Endothelial cell of umbilical vein (primary cell): ENCODE measurements at regions of chr7 and their contacts with region 1.

Region 1: DNA sequence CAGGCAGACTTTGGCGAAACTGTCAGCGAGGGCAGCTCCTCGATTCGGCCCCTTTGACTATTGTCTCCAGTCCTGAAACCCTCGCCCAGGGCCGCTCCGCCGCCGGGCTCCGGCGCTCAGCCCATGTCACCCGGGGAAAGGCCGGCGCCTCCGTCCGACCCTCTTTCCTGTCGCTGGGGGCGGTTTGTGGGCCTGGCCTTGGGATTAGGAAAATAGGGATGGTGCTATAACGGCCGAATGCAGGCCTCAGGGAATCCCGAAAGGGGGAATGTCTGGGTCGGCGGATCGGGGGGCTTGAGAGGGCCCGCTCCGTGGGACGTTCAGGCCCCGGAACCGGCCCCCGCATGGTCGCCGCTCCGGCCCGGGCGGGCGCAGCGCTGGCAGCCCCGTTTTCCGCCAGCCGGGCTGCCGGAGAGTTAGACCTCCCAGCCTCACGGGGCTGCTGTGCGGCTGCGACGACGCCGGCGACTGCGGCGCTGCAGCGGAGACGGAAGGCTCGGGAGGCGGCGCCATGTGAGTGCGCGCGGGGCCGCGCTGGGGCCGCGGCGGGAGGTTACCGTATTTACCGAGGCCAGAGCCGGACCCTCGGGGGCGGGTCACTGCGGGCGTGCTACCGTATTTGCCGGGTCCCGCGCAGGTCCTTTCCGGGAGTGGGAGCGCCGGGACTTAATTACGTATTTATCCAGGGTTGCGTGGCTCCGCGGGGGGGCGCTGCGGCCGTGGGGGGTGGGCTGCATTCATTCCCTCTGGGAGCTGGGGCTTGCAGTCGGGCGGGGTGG is 25.9 kb downstream of the ZNF775 start:
- DNase-seq: peak; percentile 87
- H3K4me3 ChIP-seq: peak overlapping the region; percentile 68 to 81 (median 79)
- H3K27ac ChIP-seq: peak overlapping the region; percentile 71
- H3K4me1 ChIP-seq: peaks cover 15% of the 10 kb centered on the region
- H3K27me3 ChIP-seq: no peaks in the 10 kb centered on the region
- CTCF ChIP-seq: peak in 1 of 2 donors; percentile 22
- POLR2A ChIP-seq: peak; percentile 89

Region 2: DNA sequence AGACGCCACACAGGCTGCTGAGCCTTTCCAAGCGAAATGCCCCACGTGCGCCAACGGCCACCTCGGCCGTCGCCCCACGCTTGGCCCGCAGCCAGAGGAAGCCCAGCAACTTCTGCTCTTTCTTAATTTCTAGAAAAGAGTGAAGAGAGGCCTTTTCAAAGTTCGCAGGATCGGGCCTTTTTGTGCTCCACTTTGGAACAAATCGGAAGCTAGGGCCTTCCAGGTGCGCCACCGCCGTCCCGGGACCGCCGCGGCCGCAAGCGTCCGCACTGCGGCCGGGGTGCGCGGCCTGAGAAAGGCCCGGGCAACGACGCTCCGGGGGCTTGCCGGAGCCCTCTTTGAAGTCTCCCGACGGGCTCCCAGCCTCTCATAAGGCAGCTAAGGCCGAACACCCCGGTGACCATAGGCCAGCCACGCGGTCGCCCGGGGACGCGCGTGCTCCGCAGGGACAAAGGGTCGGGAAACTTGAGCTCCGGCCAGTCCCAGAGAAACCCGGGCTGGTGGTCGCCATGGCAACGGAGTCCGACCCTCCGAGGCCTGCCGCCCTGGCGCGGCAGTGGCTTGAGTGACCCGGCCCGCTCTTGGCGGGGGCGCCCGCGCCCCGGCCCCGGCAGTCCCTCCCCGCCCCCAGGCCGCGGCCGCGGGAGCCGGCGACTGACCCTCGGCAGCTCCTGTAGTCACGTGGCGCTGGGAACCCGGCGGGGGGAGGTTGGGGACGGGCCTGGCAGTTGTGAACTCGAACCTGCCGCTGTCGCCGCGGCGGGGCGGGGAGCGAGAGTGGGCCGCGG is 36.7 kb before region 1 on chr7 and contains the start of gene REPIN1:
- CTCF ChIA-PET with region 1: interaction called, 11 read pairs
- POLR2A ChIA-PET with region 1: interaction called, 3 read pairs
- dilution Hi-C with region 1: no loop called
- intact Hi-C with region 1: loop called (anchors 1 kb)
- DNase-seq: peak; percentile 76
- H3K4me3 ChIP-seq: peak within 1 kb of the TSS; percentile 49 to 79 (median 62)
- H3K27ac ChIP-seq: peak within 1 kb of the TSS; percentile 57
- H3K4me1 ChIP-seq: peaks cover 26% of the 10 kb centered on the region
- H3K27me3 ChIP-seq: no peaks in the 10 kb centered on the region
- CTCF ChIP-seq: no peak
- POLR2A ChIP-seq: no peak
- total RNA-seq, gene REPIN1: 139 and 140 TPM in 2 replicates